ENCODE measurements at regions of chr1 and their contacts with region 1.

Region 1: DNA sequence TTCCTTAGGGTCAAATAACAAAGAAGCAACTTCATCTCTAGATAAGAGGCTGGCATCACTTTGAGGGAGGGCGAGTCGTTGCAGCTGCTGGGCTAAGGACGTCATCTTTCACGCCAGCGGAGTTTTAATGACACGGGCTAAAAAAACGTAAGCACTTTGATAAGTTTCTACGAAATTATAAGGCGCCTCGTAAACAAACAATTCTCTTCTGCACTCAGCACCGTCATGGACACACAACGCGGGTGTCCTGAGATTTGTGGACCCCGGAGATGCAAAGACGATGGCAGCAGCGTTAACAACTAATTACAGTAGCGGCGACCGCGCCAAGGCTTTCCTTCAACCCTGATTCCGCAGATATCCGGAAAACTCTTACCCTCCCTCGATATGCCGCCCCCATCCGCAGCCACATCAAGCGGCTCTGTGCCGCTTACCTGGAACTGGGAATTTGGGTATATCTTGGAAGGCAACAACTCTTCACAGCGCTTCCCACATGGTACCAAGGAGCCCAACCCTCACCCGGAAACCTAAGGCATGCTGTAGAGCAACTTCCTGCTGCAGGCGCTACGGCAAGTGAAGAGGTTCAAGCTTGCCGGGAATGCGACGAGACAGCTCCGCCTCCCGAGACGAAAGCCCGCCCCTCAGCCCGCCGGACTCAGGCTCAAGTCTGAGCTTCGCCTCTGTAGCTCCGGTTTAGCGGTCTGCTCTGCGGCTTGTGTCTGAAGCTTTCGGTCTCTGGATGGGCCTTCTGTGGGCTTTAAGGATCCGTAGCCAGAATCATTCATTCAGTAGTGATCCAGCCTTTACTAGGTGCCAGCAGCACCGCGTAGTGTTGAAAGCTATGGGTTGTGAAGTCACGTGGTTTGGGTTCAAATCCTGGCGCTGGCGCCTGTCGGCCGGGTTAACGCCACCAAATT is at the start of gene HEATR1:
- DNase-seq: peak; percentile 93
- H3K4me3 Mint-ChIP-seq: peak within 1 kb of the TSS; percentile 97
- H3K27ac Mint-ChIP-seq: peak within 1 kb of the TSS; percentile 88
- H3K4me1 Mint-ChIP-seq: peaks cover 31% of the 10 kb centered on the region
- H3K27me3 Mint-ChIP-seq: peaks cover 7% of the 10 kb centered on the region
- total RNA-seq, gene HEATR1: 71.6 to 75.1 TPM

Region 2: DNA sequence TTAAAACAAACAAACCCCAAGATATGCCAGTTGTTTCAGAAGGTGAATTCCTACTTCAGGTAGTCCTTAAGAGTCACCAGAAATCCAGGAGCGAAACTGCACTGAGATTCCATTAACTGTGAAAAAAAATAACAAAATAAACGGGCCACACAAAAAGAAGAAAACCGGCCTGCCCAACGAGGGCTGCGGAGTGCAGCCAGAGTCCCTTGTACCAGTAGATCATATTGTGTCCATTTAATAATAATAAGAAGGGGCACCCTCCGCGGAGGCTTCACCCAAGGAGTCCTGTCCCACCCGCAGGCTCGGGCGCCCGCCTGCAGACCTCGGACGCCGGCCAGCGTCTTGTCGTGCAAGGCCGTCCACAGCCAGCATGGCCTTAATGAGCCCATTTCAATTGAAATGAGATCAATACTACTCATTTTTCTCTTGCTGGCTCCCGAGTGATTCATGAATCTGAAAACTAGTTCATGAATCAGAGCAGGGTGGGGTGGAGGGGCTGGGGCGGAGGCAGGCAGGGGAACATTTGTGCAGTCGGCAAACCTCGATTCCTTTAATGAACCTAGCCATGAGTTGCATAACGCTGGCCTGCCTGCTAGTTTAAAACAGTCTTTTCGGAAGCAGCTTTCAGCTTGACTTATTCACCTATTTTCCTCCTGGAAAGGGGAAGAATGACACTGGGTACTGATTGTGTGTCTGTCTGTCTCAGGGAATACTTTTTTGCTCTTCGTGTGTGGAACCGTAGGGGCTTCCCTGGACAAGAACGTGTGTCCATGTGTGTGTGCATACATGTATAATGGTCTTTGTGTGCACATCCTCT is 1881.1 kb before region 1 on chr1:
- CTCF ChIA-PET with region 1: no interaction called
- intact Hi-C with region 1: no loop called
- DNase-seq: peak; percentile 91
- H3K4me3 Mint-ChIP-seq: peak overlapping the region; percentile 70
- H3K27ac Mint-ChIP-seq: peak overlapping the region; percentile 97
- H3K4me1 Mint-ChIP-seq: peaks cover 61% of the 10 kb centered on the region
- H3K27me3 Mint-ChIP-seq: no peaks in the 10 kb centered on the region

Region 3: DNA sequence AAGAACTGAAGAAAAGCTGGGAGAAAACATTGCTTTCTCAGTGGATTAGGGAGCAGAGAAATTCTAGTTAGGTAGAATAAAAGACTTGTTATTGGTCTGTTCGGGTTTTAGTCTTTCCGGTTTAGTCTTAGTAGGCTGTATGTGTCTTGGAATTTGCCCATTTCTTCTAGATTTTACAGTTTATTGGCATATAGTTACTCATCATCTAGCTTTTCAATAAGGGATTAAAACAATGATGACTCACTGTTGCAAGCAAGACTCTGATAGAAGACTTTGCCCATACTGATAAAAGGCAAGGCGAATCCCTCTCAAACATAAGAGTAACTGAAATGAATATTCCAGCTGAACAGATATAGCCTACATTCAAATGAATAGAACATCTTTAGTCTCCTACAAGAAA is 399.6 kb before region 1 on chr1:
- CTCF ChIA-PET with region 1: no interaction called
- intact Hi-C with region 1: no loop called
- DNase-seq: no peak
- H3K4me3 Mint-ChIP-seq: no peak overlapping the region
- H3K27ac Mint-ChIP-seq: no peak overlapping the region
- H3K4me1 Mint-ChIP-seq: no peaks in the 10 kb centered on the region
- H3K27me3 Mint-ChIP-seq: no peaks in the 10 kb centered on the region

Region 4: GRCh38 chr1:236523701-236524141 is 80.5 kb before region 1 on chr1 and contains the start of gene LGALS8:
- CTCF ChIA-PET with region 1: no interaction called
- intact Hi-C with region 1: loop called (anchors 1 kb)
- DNase-seq: peak; percentile 91
- H3K4me3 Mint-ChIP-seq: peak within 1 kb of the TSS; percentile 96
- H3K27ac Mint-ChIP-seq: peak within 1 kb of the TSS; percentile 97
- H3K4me1 Mint-ChIP-seq: peaks cover 9% of the 10 kb centered on the region
- H3K27me3 Mint-ChIP-seq: no peaks in the 10 kb centered on the region
- total RNA-seq, gene LGALS8: 78.6 to 89.4 TPM

Region 5: GRCh38 chr1:236795035-236795756 is 190.9 kb after region 1 on chr1 and contains the start of gene MTR:
- CTCF ChIA-PET with region 1: no interaction called
- intact Hi-C with region 1: loop called (anchors 1 kb)
- DNase-seq: peak; percentile 98
- H3K4me3 Mint-ChIP-seq: peak within 1 kb of the TSS; percentile 80
- H3K27ac Mint-ChIP-seq: peak within 1 kb of the TSS; percentile 86
- H3K4me1 Mint-ChIP-seq: peaks cover 27% of the 10 kb centered on the region
- H3K27me3 Mint-ChIP-seq: no peaks in the 10 kb centered on the region
- total RNA-seq, gene MTR: 55.3 to 57.6 TPM

Region 6: DNA sequence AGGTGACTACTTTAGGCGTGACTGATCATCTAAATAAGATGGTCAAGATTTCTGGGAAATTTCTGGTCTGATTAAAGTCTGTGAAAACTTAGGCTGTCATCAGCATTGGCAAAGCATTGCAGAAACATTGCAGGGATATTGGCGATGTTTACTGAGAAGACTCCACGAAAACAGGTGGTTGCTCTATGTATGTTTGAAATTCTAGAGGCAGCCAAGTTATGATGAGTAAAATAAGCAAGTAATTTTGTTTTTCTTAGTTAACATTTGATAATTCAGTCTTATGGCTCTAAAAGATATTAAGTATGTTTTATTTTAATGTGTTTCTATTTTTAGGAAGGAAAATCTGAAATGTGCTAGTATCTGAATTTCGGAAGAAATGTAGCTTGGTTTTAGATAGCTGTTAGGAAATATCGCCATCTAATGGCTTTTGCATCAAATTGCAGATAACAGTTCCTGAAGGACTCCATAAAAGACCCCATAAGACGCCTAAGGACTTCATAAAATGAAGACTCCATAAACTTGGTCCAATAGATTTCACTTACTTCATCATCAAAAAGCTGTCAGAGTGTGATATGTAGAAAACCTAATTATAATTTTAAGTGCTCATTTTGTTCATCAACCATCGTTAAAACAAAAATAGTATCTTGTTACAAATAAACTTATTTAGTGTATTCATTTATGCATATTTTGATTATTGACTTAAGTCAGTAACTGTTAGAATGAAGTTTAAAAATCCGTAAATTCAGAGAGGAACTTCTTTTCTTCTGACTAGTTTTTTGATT is 782.3 kb after region 1 on chr1:
- CTCF ChIA-PET with region 1: interaction called, 6 read pairs
- intact Hi-C with region 1: loop called (anchors 2 kb)
- DNase-seq: no peak
- H3K4me3 Mint-ChIP-seq: no peak overlapping the region
- H3K27ac Mint-ChIP-seq: no peak overlapping the region
- H3K4me1 Mint-ChIP-seq: no peaks in the 10 kb centered on the region
- H3K27me3 Mint-ChIP-seq: peaks cover 6% of the 10 kb centered on the region

Measured in activated naive CD4-positive, alpha-beta T cell treated with anti-CD3 and anti-CD28 coated beads for 36 hours (primary cell).